ENCODE measurements at regions of chr4 and their contacts with region 1.

Region 1: DNA sequence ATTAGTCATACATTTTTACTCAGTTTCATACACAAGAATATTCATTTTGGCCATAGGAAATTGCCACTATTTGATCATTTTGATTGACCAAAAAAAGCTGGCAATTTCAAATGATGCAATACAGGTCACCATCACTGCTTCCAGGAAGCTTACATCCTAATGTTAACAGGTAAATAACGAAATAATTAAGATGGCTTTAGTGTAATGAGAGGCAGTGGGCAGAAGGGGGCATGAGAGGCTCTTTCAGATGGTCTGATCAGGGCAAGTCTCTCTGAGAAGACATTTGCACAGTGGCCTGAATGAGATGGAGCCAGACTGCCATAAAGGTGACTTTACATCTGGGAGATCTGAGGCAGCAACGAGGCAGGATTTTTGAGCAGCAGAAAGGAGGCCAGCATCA is 170.7 kb downstream of the SLIT2 start:
- DNase-seq: peak in 3 of 9 experiments; percentile 12 to 48 (median 46)
- ATAC-seq: peak; percentile 55
- H3K4me3 ChIP-seq: no peak overlapping the region
- H3K4me3 Mint-ChIP-seq: no peak overlapping the region
- H3K27ac ChIP-seq: no peak overlapping the region
- H3K27ac Mint-ChIP-seq: no peak overlapping the region
- H3K4me1 ChIP-seq: no peaks in the 10 kb centered on the region
- H3K4me1 Mint-ChIP-seq: peaks cover 4% of the 10 kb centered on the region
- H3K27me3 ChIP-seq: no peaks in the 10 kb centered on the region
- H3K27me3 Mint-ChIP-seq: no peaks in the 10 kb centered on the region
- CTCF ChIP-seq: no peak

Region 2: GRCh38 chr4:20337261-20337664 is 85.1 kb before region 1 on chr4:
- CTCF ChIA-PET with region 1: no interaction called
- POLR2A ChIA-PET with region 1: no interaction called
- intact Hi-C with region 1: no loop called
- DNase-seq: no peak
- ATAC-seq: no peak
- H3K4me3 ChIP-seq: no peak overlapping the region
- H3K4me3 Mint-ChIP-seq: no peak overlapping the region
- H3K27ac ChIP-seq: no peak overlapping the region
- H3K27ac Mint-ChIP-seq: no peak overlapping the region
- H3K4me1 ChIP-seq: no peaks in the 10 kb centered on the region
- H3K4me1 Mint-ChIP-seq: no peaks in the 10 kb centered on the region
- H3K27me3 ChIP-seq: no peaks in the 10 kb centered on the region
- H3K27me3 Mint-ChIP-seq: no peaks in the 10 kb centered on the region
- CTCF ChIP-seq: no peak

Region 3: DNA sequence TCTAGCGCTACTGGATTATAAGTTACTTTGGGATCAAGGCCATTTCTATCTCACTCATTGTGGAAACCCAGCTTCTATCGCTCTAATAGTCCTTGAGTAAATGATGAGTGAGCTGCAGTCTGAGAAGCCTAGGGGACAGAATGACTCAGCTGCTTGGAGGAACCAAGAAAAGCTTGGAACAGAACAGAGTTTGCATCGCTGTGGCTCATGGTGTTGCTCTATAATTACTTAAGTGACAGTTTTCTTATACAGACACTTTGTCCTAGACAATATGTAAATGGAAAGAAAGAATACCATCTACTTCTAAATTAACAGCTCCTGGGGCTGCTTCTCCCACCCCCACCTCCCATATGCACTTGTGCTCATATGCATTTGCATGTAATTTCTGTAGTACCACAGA is 13.8 kb before region 1 on chr4:
- CTCF ChIA-PET with region 1: no interaction called
- POLR2A ChIA-PET with region 1: no interaction called
- intact Hi-C with region 1: no loop called
- DNase-seq: no peak
- ATAC-seq: no peak
- H3K4me3 ChIP-seq: no peak overlapping the region
- H3K4me3 Mint-ChIP-seq: no peak overlapping the region
- H3K27ac ChIP-seq: no peak overlapping the region
- H3K27ac Mint-ChIP-seq: no peak overlapping the region
- H3K4me1 ChIP-seq: no peaks in the 10 kb centered on the region
- H3K4me1 Mint-ChIP-seq: no peaks in the 10 kb centered on the region
- H3K27me3 ChIP-seq: no peaks in the 10 kb centered on the region
- H3K27me3 Mint-ChIP-seq: no peaks in the 10 kb centered on the region
- CTCF ChIP-seq: no peak

Region 4: DNA sequence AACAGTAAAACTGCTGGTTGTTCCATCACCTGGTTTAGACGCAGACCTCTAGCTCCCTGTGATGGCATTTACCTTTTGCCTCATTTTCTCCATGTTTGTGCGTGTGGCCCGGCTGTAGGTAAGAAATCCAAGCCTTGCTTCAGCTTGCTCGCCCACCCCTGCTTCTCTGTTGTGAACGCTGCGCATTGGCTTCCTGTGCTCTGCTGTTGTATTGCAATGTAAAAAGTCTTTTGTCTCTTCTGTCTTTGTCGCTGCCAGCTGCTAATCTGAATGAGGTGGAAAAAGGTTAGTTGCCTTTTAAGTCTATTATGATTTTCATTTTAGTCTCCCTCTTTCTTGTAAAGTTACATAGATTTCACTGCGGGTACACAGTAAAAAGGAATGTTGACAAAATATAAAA is 150.6 kb after region 1 on chr4:
- CTCF ChIA-PET with region 1: no interaction called
- POLR2A ChIA-PET with region 1: no interaction called
- intact Hi-C with region 1: no loop called
- DNase-seq: no peak
- ATAC-seq: no peak
- H3K4me3 ChIP-seq: no peak overlapping the region
- H3K4me3 Mint-ChIP-seq: no peak overlapping the region
- H3K27ac ChIP-seq: no peak overlapping the region
- H3K27ac Mint-ChIP-seq: no peak overlapping the region
- H3K4me1 ChIP-seq: no peaks in the 10 kb centered on the region
- H3K4me1 Mint-ChIP-seq: no peaks in the 10 kb centered on the region
- H3K27me3 ChIP-seq: no peaks in the 10 kb centered on the region
- H3K27me3 Mint-ChIP-seq: peaks cover 2% of the 10 kb centered on the region
- CTCF ChIP-seq: no peak

Region 5: GRCh38 chr4:21134994-21135393 is 712.6 kb after region 1 on chr4:
- CTCF ChIA-PET with region 1: no interaction called
- POLR2A ChIA-PET with region 1: no interaction called
- intact Hi-C with region 1: loop called in 1 of 2 experiments (anchors 10 kb)
- DNase-seq: peak in 2 of 9 experiments; percentile 33 to 44
- ATAC-seq: no peak
- H3K4me3 ChIP-seq: no peak overlapping the region
- H3K4me3 Mint-ChIP-seq: no peak overlapping the region
- H3K27ac ChIP-seq: no peak overlapping the region
- H3K27ac Mint-ChIP-seq: no peak overlapping the region
- H3K4me1 ChIP-seq: no peaks in the 10 kb centered on the region
- H3K4me1 Mint-ChIP-seq: no peaks in the 10 kb centered on the region
- H3K27me3 ChIP-seq: no peaks in the 10 kb centered on the region
- H3K27me3 Mint-ChIP-seq: no peaks in the 10 kb centered on the region
- CTCF ChIP-seq: no peak

Region 6: GRCh38 chr4:21765810-21766407 is 1343.5 kb after region 1 on chr4:
- CTCF ChIA-PET with region 1: no interaction called
- POLR2A ChIA-PET with region 1: no interaction called
- intact Hi-C with region 1: loop called (anchors 2 kb)
- DNase-seq: peak in 4 of 9 experiments; percentile 1 to 33 (median 16)
- ATAC-seq: peak; percentile 55
- H3K4me3 ChIP-seq: no peak overlapping the region
- H3K4me3 Mint-ChIP-seq: no peak overlapping the region
- H3K27ac ChIP-seq: no peak overlapping the region
- H3K27ac Mint-ChIP-seq: no peak overlapping the region
- H3K4me1 ChIP-seq: no peaks in the 10 kb centered on the region
- H3K4me1 Mint-ChIP-seq: no peaks in the 10 kb centered on the region
- H3K27me3 ChIP-seq: no peaks in the 10 kb centered on the region
- H3K27me3 Mint-ChIP-seq: peaks cover 6% of the 10 kb centered on the region
- CTCF ChIP-seq: peak; percentile 65

Measured in CD8-positive, alpha-beta T cell (primary cell).